Left lung (tissue), 14 donors: ENCODE measurements at regions of chr1 and their contacts with region 1.

Region 1: GRCh38 chr1:20981915-20982314 is 194.8 kb downstream of the EIF4G3 start:
- DNase-seq: peak in 1 of 4 donors; percentile 19
- ATAC-seq: peak; percentile 87
- H3K4me3 ChIP-seq: no peak overlapping the region
- H3K27ac ChIP-seq: no peak overlapping the region
- H3K4me1 ChIP-seq: peaks cover 0 to 3% of the 10 kb centered on the region in 2 donors
- H3K27me3 ChIP-seq: no peaks in the 10 kb centered on the region
- CTCF ChIP-seq: peak in 1 of 2 donors; percentile 20

Region 2: DNA sequence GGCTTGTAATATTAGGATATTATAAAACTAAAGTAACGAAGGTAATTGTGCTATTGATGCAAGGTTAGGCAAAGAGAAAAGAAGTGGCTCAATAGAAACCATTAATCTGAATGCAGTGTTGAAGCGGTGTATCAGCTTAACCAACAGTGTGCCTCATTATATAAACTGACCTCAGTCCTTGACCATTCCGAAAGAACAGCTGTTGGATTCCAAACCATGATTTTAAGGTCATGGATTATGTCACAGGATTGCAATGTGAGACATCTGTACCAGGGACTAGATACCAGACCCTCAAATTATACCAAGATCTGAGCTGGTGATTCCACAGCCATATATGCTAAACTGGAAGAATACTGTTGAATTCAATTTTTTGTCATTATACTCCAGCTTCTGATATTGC is 60.6 kb before region 1 on chr1:
- intact Hi-C with region 1: no loop called
- DNase-seq: no peak
- ATAC-seq: no peak
- H3K4me3 ChIP-seq: no peak overlapping the region
- H3K27ac ChIP-seq: no peak overlapping the region
- H3K4me1 ChIP-seq: no peaks in the 10 kb centered on the region
- H3K27me3 ChIP-seq: no peaks in the 10 kb centered on the region
- CTCF ChIP-seq: no peak

Region 3: GRCh38 chr1:21189906-21190500 is 208.1 kb after region 1 on chr1:
- intact Hi-C with region 1: loop called in 1 of 2 experiments (anchors 10 kb)
- DNase-seq: no peak
- ATAC-seq: no peak
- H3K4me3 ChIP-seq: no peak overlapping the region
- H3K27ac ChIP-seq: no peak overlapping the region
- H3K4me1 ChIP-seq: peaks cover 0 to 7% of the 10 kb centered on the region in 2 donors
- H3K27me3 ChIP-seq: no peaks in the 10 kb centered on the region
- CTCF ChIP-seq: no peak

Region 4: GRCh38 chr1:21216835-21217811 is 235.2 kb after region 1 on chr1:
- intact Hi-C with region 1: no loop called
- DNase-seq: peak in 3 of 4 donors; percentile 18 to 69 (median 44)
- ATAC-seq: peak; percentile 72
- H3K4me3 ChIP-seq: no peak overlapping the region
- H3K27ac ChIP-seq: no peak overlapping the region
- H3K4me1 ChIP-seq: no peaks in the 10 kb centered on the region
- H3K27me3 ChIP-seq: no peaks in the 10 kb centered on the region
- CTCF ChIP-seq: peak; percentile 63 to 79